CD4-positive, alpha-beta memory T cell (primary cell): ENCODE measurements at regions of chr7 and their contacts with region 1.

Region 1: DNA sequence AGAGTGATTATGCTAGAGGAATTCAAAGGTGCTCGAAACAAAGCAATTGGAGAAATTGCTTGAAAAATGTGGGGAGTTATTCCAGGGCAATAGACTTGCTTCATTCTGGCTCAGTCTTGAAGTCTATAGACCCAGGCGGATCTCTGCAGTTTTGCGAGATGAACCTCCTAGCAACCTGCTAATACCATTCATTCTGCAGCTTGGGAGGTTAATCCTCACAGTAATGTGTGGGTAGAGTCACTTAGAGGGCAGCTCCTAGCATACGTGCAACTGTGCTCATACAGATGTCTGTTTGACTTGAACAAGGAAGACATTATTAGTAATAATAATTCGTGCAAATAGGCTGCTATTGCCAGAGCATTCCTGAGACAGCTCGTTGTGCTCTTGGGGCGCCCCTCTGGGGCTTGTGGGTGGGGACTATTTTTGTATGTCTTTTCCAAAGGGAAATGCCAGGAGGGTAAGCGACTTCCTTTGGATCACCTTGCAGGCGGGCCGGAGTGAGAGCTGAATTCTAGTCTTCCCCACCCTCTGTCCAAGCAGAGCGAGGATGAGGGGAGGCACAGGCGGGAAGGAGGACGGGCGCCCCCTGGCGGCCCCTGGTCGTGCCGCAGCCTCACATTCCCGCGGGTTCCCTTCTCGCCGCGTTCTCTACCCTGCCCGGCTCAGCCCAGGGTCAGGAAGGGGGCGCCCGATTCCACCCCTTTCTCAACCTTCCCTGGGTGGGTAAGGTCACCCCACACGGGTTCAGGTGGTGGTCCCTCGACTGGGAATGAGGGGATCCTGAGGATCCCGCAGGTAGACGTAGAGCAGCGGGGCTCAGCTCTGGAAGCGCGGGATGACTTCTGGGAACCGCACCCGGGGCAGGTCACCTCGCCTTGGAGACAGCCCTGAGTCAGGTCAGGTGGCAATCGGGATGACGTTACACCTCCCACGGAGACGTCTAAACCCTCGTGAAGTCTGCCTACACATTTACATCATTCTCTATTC is 241.5 kb downstream of the PHTF2 start:
- DNase-seq: peak in 4 of 5 donors; percentile 14 to 49 (median 40)
- H3K4me3 ChIP-seq: no peak overlapping the region
- H3K4me3 Mint-ChIP-seq: no peak overlapping the region
- H3K27ac ChIP-seq: no peak overlapping the region
- H3K27ac Mint-ChIP-seq: no peak overlapping the region
- H3K4me1 ChIP-seq: no peaks in the 10 kb centered on the region
- H3K4me1 Mint-ChIP-seq: peaks cover 0 to 8% (median 1%) of the 10 kb centered on the region in 4 donors
- H3K27me3 ChIP-seq: peaks cover 5% of the 10 kb centered on the region
- H3K27me3 Mint-ChIP-seq: peaks cover 3 to 18% of the 10 kb centered on the region in 2 donors

Region 2: GRCh38 chr7:77504951-77505350 is 535.1 kb before region 1 on chr7:
- CTCF ChIA-PET with region 1: no interaction called
- POLR2A ChIA-PET with region 1: no interaction called
- intact Hi-C with region 1: no loop called
- DNase-seq: no peak
- H3K4me3 ChIP-seq: no peak overlapping the region
- H3K4me3 Mint-ChIP-seq: no peak overlapping the region
- H3K27ac ChIP-seq: no peak overlapping the region
- H3K27ac Mint-ChIP-seq: no peak overlapping the region
- H3K4me1 ChIP-seq: no peaks in the 10 kb centered on the region
- H3K4me1 Mint-ChIP-seq: no peaks in the 10 kb centered on the region
- H3K27me3 ChIP-seq: no peaks in the 10 kb centered on the region
- H3K27me3 Mint-ChIP-seq: peaks cover 3 to 6% of the 10 kb centered on the region in 2 donors

Region 3: GRCh38 chr7:77940647-77941046 is 99.4 kb before region 1 on chr7:
- CTCF ChIA-PET with region 1: interaction called, 3 read pairs
- POLR2A ChIA-PET with region 1: no interaction called
- intact Hi-C with region 1: loop called (anchors 5 kb)
- DNase-seq: no peak
- H3K4me3 ChIP-seq: no peak overlapping the region
- H3K4me3 Mint-ChIP-seq: no peak overlapping the region
- H3K27ac ChIP-seq: no peak overlapping the region
- H3K27ac Mint-ChIP-seq: no peak overlapping the region
- H3K4me1 ChIP-seq: peaks cover 2% of the 10 kb centered on the region
- H3K4me1 Mint-ChIP-seq: peaks cover 7 to 20% (median 11%) of the 10 kb centered on the region in 4 donors
- H3K27me3 ChIP-seq: no peaks in the 10 kb centered on the region
- H3K27me3 Mint-ChIP-seq: no peaks in the 10 kb centered on the region

Region 4: GRCh38 chr7:78020136-78020873 is 19.8 kb before region 1 on chr7:
- CTCF ChIA-PET with region 1: interaction called, 102 read pairs
- POLR2A ChIA-PET with region 1: interaction called, 6 read pairs
- intact Hi-C with region 1: no loop called
- DNase-seq: peak; percentile 32 to 45 (median 39)
- H3K4me3 ChIP-seq: no peak overlapping the region
- H3K4me3 Mint-ChIP-seq: peak overlapping the region; percentile 78 to 89 (median 82)
- H3K27ac ChIP-seq: no peak overlapping the region
- H3K27ac Mint-ChIP-seq: peak overlapping the region; percentile 32 to 84 (median 68)
- H3K4me1 ChIP-seq: peaks cover 11% of the 10 kb centered on the region
- H3K4me1 Mint-ChIP-seq: peaks cover 4 to 11% (median 8%) of the 10 kb centered on the region in 4 donors
- H3K27me3 ChIP-seq: peaks cover 4% of the 10 kb centered on the region
- H3K27me3 Mint-ChIP-seq: peaks cover 0 to 2% of the 10 kb centered on the region in 2 donors

Region 5: GRCh38 chr7:78052112-78052511 is 12.0 kb after region 1 on chr7:
- CTCF ChIA-PET with region 1: interaction called, 13 read pairs
- POLR2A ChIA-PET with region 1: no interaction called
- intact Hi-C with region 1: no loop called
- DNase-seq: no peak
- H3K4me3 ChIP-seq: no peak overlapping the region
- H3K4me3 Mint-ChIP-seq: no peak overlapping the region
- H3K27ac ChIP-seq: no peak overlapping the region
- H3K27ac Mint-ChIP-seq: no peak overlapping the region
- H3K4me1 ChIP-seq: no peaks in the 10 kb centered on the region
- H3K4me1 Mint-ChIP-seq: no peaks in the 10 kb centered on the region
- H3K27me3 ChIP-seq: no peaks in the 10 kb centered on the region
- H3K27me3 Mint-ChIP-seq: peaks cover 10 to 12% of the 10 kb centered on the region in 2 donors